H1 (cell line): ENCODE measurements at regions of chr6 and their contacts with region 1.

Region 1: GRCh38 chr6:150600301-150601017 is 774 bp downstream of the PLEKHG1 start:
- DNase-seq: peak; percentile 54 to 73
- H3K4me3 ChIP-seq: peak overlapping the region; percentile 56 to 83 (median 65)
- H3K27ac ChIP-seq: no peak overlapping the region
- H3K4me1 ChIP-seq: peaks cover 0 to 2% (median 0%) of the 10 kb centered on the region in 4 experiments; a peak in 2 of 7 replicates
- H3K27me3 ChIP-seq: peaks cover 15 to 41% (median 28%) of the 10 kb centered on the region in 4 experiments
- CTCF ChIP-seq: peak; percentile 49 to 57 (median 51)
- EP300 ChIP-seq: no peak; a peak in 1 of 3 replicates
- POLR2A ChIP-seq: no peak
- RAD21 ChIP-seq: peak; percentile 51 to 63

Region 2: DNA sequence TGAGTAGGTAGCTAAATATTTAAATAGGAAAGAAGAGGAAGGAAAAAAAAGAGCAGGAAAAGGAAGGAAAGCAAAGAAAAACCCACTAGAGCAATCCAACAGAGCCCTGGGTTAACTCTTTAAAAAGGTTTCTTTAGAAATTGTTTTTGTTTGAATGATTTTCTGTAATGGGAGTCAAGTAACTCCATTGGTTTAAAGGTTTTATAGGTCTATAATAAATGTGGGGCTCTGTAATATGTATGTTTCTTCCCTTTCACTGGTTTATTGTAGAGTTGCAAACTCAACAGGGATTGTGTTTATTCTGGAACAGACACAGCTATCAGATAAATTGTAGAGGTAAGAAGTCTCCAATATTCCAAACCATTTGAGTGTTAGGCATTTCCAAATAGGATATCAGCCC is 10.1 kb after region 1 on chr6:
- CTCF ChIA-PET with region 1: interaction called, 15 read pairs
- POLR2A ChIA-PET with region 1: interaction called, 3 read pairs
- DNase-seq: no peak
- H3K4me3 ChIP-seq: no peak overlapping the region
- H3K27ac ChIP-seq: no peak overlapping the region
- H3K4me1 ChIP-seq: no peaks in the 10 kb centered on the region
- H3K27me3 ChIP-seq: no peaks in the 10 kb centered on the region; a peak in 1 of 7 replicates
- CTCF ChIP-seq: no peak
- EP300 ChIP-seq: no peak
- POLR2A ChIP-seq: no peak
- RAD21 ChIP-seq: no peak

Region 3: GRCh38 chr6:150622941-150623874 is 22.7 kb after region 1 on chr6:
- CTCF ChIA-PET with region 1: no interaction called
- POLR2A ChIA-PET with region 1: no interaction called
- DNase-seq: no peak
- H3K4me3 ChIP-seq: no peak overlapping the region
- H3K27ac ChIP-seq: no peak overlapping the region
- H3K4me1 ChIP-seq: no peaks in the 10 kb centered on the region
- H3K27me3 ChIP-seq: no peaks in the 10 kb centered on the region
- CTCF ChIP-seq: no peak
- EP300 ChIP-seq: no peak
- POLR2A ChIP-seq: no peak
- RAD21 ChIP-seq: no peak